ENCODE measurements at regions of chr14 and their contacts with region 1.

Region 1: DNA sequence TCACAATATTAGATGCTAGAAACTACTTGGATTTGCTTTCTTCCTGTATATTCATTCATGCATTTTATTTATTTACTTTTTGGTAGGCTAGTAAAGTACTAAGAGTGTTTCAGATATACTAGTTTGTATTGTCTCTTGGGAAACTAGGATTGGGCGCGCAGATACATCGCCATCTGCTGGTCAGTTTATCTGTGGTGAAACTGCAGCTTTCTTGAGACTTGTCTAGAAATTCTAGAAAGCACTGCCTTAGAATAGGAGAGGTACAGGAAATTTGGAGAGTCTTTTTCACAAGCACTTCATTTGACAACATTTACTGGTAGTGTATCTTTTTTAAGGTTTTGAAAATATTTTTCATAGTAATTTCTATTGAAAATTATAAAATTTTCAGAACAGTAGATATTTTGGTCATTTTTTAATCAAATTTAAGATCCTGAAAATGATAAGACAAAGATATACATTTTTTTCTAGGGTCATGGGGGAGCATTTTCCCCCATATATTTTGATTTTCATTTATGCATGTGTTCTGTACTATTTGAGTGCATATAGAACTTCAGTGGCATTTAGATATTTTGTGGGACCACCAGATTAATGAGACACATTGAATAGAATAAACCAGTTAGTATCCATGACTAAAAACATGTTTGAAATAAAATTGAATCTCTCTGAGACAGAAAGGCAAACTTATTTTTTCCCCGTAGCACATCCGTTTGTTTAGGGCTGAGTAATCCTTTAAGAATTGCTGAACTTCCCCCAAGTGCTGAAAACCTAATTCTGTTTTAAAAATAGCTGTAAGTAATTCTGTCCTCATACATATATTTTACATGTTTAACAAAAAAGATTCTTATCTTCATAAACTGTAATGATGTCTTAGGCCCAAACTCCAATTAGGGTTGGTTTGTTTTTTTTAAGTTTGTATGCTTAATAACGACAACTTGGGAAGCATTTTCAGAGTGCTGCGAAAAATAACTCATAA is 44.5 kb downstream of the SLC38A6 start:
- DNase-seq: peak; percentile 80
- H3K4me3 ChIP-seq: peak overlapping the region in 1 of 3 experiments; percentile 46
- H3K27ac ChIP-seq: peak overlapping the region; percentile 89
- H3K4me1 ChIP-seq: peaks cover 21% of the 10 kb centered on the region
- H3K27me3 ChIP-seq: no peaks in the 10 kb centered on the region
- CTCF ChIP-seq: peak; percentile 66 to 68
- POLR2A ChIP-seq: no peak

Region 2: DNA sequence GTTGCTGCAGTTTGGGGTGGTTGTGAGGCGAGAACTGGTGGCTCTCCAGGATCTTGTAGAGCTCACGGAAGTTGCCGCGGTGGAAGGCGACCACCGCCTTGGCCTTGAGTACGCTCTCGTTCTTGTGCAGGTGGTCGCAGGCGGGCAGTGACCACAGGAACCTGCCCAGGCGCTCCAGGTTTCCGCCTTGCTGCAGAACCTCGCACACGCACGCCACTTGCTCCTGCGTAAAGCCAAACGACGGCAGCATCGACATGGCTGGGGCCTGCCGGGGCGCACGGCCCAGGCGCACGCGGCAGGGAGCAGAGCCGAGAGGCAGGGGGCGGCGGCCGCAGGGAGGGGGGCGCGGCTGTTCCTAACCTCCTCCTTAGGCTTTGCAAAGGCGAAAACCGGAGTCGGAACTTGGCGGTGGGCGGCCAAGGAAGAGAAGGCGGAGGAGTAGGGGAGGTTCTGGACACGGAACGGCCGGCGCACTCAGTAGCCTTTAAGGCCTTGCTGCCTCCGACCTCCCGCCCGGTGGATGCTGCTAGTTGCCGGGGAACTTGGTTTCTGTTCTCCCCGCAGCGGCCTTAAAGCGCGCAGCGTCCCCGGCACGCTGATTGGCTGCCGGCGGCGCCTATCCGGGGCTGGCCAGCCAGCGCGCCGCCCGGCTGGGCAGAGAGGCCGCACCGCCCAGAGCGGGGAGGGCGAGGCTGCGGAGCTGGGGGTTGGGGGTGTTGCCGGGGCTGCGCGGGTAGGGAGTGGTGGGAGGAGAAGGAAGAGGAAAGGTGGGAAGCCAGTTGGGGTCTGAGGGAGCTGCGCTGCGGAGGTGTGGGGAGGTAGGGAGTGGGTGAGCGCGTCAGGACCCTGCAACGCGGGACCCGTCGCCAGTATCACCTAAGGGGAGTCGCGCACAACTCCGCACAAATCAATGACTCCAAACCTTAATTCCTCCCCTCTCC is 376.3 kb before region 1 on chr14 and contains the start of gene SIX1:
- CTCF ChIA-PET with region 1: interaction called, 3 read pairs
- POLR2A ChIA-PET with region 1: no interaction called
- dilution Hi-C with region 1: loop called (anchors 25 kb)
- intact Hi-C with region 1: loop called (anchors 1 kb)
- DNase-seq: peak; percentile 83
- H3K4me3 ChIP-seq: peak within 1 kb of the TSS; percentile 12 to 47 (median 15)
- H3K27ac ChIP-seq: no peak within 1 kb of the TSS
- H3K4me1 ChIP-seq: peaks cover 25% of the 10 kb centered on the region
- H3K27me3 ChIP-seq: peaks cover 80 to 98% of the 10 kb centered on the region in 2 experiments
- CTCF ChIP-seq: no peak
- POLR2A ChIP-seq: peak; percentile 57
- total RNA-seq, gene SIX1: 0.40 and 0.55 TPM in 2 replicates

Region 3: DNA sequence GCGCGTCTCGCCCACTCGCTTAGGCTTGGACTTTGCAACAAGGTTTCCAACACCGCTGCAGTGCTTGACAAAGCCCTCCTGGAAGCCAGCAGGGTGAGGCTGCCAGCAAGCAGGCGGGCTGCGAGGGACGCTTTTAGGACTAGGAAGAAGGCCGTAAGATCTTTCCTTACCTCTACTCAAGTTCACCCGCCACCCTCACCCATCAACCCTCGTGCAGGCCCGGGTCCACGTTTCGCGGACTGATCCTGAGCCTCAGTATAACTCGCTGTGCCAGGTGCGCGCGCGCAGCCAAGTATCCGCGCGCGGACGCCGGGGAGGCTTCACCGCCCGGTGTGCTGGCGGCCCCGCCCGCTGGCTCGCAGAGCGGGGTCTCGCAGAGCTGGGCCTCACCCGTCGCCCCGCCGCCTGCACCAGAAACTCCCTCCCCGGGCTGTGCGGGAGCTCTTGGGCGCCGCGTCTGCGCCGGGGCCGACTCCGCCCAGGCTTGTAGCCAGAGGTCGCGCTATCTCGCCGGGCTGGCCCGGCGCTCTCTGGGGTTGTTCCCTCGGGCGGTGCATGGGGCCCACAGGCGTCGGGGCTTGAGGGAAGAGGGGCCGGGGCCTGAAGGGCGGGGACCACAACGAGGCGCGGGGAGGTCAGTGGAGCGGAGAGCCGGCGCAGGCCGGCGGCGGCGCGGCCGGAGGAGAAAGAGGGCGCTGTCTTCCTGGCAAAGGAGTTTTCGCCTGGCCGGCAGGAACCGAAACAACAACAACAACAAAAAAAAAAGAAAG is 368.7 kb before region 1 on chr14:
- CTCF ChIA-PET with region 1: interaction called, 19 read pairs
- POLR2A ChIA-PET with region 1: no interaction called
- dilution Hi-C with region 1: no loop called
- intact Hi-C with region 1: loop called (anchors 1 kb)
- DNase-seq: peak; percentile 65
- H3K4me3 ChIP-seq: peak overlapping the region; percentile 22 to 64 (median 59)
- H3K27ac ChIP-seq: peak overlapping the region; percentile 3
- H3K4me1 ChIP-seq: peaks cover 10% of the 10 kb centered on the region
- H3K27me3 ChIP-seq: peaks cover 35 to 44% of the 10 kb centered on the region in 2 experiments
- CTCF ChIP-seq: peak; percentile 39 to 59
- POLR2A ChIP-seq: no peak

Region 4: GRCh38 chr14:60724137-60724619 is 301.4 kb before region 1 on chr14 and contains the start of gene SIX4:
- CTCF ChIA-PET with region 1: interaction called, 5 read pairs
- POLR2A ChIA-PET with region 1: interaction called, 3 read pairs
- dilution Hi-C with region 1: no loop called
- intact Hi-C with region 1: loop called (anchors 1 kb)
- DNase-seq: peak; percentile 85
- H3K4me3 ChIP-seq: peak within 1 kb of the TSS; percentile 81 to 94 (median 86)
- H3K27ac ChIP-seq: peak within 1 kb of the TSS; percentile 57
- H3K4me1 ChIP-seq: peaks cover 8% of the 10 kb centered on the region
- H3K27me3 ChIP-seq: peaks cover 9 to 16% of the 10 kb centered on the region in 2 experiments
- CTCF ChIP-seq: no peak
- POLR2A ChIP-seq: peak; percentile 75
- total RNA-seq, gene SIX4: 4.7 and 7.5 TPM in 2 replicates

Region 5: GRCh38 chr14:61178226-61179060 is 152.9 kb after region 1 on chr14:
- CTCF ChIA-PET with region 1: interaction called, 5 read pairs
- POLR2A ChIA-PET with region 1: no interaction called
- dilution Hi-C with region 1: no loop called
- intact Hi-C with region 1: loop called (anchors 1 kb)
- DNase-seq: peak; percentile 95
- H3K4me3 ChIP-seq: peak overlapping the region in 1 of 3 experiments; percentile 42
- H3K27ac ChIP-seq: peak overlapping the region; percentile 99
- H3K4me1 ChIP-seq: peaks cover 40% of the 10 kb centered on the region
- H3K27me3 ChIP-seq: no peaks in the 10 kb centered on the region
- CTCF ChIP-seq: no peak
- POLR2A ChIP-seq: peak; percentile 45

Region 6: GRCh38 chr14:61188978-61189808 is 163.7 kb after region 1 on chr14:
- CTCF ChIA-PET with region 1: interaction called, 34 read pairs
- POLR2A ChIA-PET with region 1: no interaction called
- dilution Hi-C with region 1: no loop called
- intact Hi-C with region 1: loop called (anchors 1 kb)
- DNase-seq: peak; percentile 70
- H3K4me3 ChIP-seq: peak overlapping the region; percentile 9 to 50 (median 32)
- H3K27ac ChIP-seq: peak overlapping the region; percentile 44
- H3K4me1 ChIP-seq: peaks cover 44% of the 10 kb centered on the region
- H3K27me3 ChIP-seq: no peaks in the 10 kb centered on the region
- CTCF ChIP-seq: peak; percentile 70 to 85
- POLR2A ChIP-seq: no peak

Region 7: DNA sequence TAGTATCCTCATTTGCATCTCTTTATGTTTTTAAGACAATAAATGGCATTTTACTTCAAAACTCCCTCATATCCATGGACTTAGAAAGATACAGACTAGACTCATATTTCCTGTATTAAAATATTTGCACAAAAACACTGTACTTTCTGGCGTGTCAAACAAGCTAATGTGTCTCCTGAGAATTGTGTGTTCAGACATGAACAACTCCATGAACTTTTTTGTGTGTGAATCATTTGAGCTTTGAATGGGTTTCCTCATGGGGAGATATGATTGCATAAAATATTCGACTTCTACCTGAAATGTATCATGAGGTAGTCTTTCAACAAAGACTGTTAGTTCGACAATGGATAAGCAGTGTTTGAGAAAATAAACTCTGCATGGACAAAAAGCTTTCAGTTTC is 196.9 kb after region 1 on chr14:
- CTCF ChIA-PET with region 1: no interaction called
- POLR2A ChIA-PET with region 1: no interaction called
- dilution Hi-C with region 1: no loop called
- intact Hi-C with region 1: no loop called
- DNase-seq: no peak
- H3K4me3 ChIP-seq: no peak overlapping the region
- H3K27ac ChIP-seq: no peak overlapping the region
- H3K4me1 ChIP-seq: no peaks in the 10 kb centered on the region
- H3K27me3 ChIP-seq: peaks cover 4 to 10% of the 10 kb centered on the region in 2 experiments
- CTCF ChIP-seq: no peak
- POLR2A ChIP-seq: no peak

Region 8: DNA sequence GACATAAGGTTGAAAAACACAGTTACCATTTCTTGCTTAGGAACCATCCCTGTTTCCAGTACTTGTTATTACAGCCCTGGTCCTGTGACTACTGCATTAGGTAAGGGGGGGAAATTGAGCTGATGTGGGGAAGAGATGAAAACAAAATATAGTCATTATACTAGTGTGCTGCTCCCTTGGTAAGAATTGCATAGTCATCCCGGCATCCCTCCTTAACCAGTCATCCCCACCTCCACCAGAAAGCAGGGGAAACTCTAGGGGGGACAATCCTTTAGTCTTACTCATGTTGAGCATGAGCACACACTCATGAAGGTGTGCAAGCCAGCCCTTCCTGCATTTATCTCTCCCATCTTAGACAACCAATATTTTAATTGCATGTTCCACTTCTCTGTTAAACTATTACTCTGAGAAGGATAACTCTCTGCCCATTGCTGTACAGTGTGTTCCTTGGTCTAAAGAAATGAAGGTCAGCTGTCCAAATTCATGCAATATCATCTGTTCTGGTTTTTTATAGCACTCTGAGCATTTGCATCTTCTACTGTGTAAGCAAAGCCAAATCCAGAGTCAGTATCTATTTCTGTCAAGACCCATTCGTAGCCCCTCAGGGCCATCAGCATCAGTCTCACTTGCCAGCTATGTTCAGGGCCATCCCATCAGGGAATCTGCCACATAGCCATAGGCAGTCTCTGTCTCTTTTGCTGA is 208.8 kb after region 1 on chr14:
- CTCF ChIA-PET with region 1: no interaction called
- POLR2A ChIA-PET with region 1: no interaction called
- dilution Hi-C with region 1: no loop called
- intact Hi-C with region 1: no loop called
- DNase-seq: no peak
- H3K4me3 ChIP-seq: no peak overlapping the region
- H3K27ac ChIP-seq: no peak overlapping the region
- H3K4me1 ChIP-seq: no peaks in the 10 kb centered on the region
- H3K27me3 ChIP-seq: peaks cover 0 to 1% of the 10 kb centered on the region in 2 experiments
- CTCF ChIP-seq: no peak
- POLR2A ChIP-seq: no peak

Measured in endothelial cell of umbilical vein (primary cell).